PC-9 (cell line): ENCODE measurements at regions of chr10 and their contacts with region 1.

Region 1: GRCh38 chr10:119028900-119029612 is 458 bp upstream of the NANOS1 start:
- DNase-seq: peak; percentile 58 to 79
- H3K4me3 ChIP-seq: peak overlapping the region; percentile 26; the same call in 1 of the 2 replicates
- H3K27ac ChIP-seq: no peak overlapping the region
- H3K4me1 ChIP-seq: peaks cover 46% of the 10 kb centered on the region
- H3K27me3 ChIP-seq: no peaks in the 10 kb centered on the region
- CTCF ChIP-seq: no peak; the same call in 1 of the 2 replicates

Region 2: GRCh38 chr10:118754720-118755480 is 274.2 kb before region 1 on chr10 and contains the start of gene CACUL1:
- CTCF ChIA-PET with region 1: no interaction called
- POLR2A ChIA-PET with region 1: interaction called, 5 read pairs
- intact Hi-C with region 1: loop called (anchors 5 kb)
- DNase-seq: peak; percentile 91 to 98
- H3K4me3 ChIP-seq: peak within 1 kb of the TSS; percentile 96
- H3K27ac ChIP-seq: peak within 1 kb of the TSS; percentile 69
- H3K4me1 ChIP-seq: peaks cover 10% of the 10 kb centered on the region; the same call in 1 of the 2 replicates
- H3K27me3 ChIP-seq: no peaks in the 10 kb centered on the region
- CTCF ChIP-seq: no peak
- total RNA-seq, gene CACUL1: 49.4 and 62.5 TPM in 2 replicates

Region 3: GRCh38 chr10:118835682-118836326 is 193.3 kb before region 1 on chr10:
- CTCF ChIA-PET with region 1: no interaction called
- POLR2A ChIA-PET with region 1: no interaction called
- intact Hi-C with region 1: loop called (anchors 5 kb)
- DNase-seq: peak; percentile 89 to 90
- H3K4me3 ChIP-seq: no peak overlapping the region
- H3K27ac ChIP-seq: peak overlapping the region; percentile 41
- H3K4me1 ChIP-seq: peaks cover 38% of the 10 kb centered on the region
- H3K27me3 ChIP-seq: no peaks in the 10 kb centered on the region
- CTCF ChIP-seq: no peak

Region 4: DNA sequence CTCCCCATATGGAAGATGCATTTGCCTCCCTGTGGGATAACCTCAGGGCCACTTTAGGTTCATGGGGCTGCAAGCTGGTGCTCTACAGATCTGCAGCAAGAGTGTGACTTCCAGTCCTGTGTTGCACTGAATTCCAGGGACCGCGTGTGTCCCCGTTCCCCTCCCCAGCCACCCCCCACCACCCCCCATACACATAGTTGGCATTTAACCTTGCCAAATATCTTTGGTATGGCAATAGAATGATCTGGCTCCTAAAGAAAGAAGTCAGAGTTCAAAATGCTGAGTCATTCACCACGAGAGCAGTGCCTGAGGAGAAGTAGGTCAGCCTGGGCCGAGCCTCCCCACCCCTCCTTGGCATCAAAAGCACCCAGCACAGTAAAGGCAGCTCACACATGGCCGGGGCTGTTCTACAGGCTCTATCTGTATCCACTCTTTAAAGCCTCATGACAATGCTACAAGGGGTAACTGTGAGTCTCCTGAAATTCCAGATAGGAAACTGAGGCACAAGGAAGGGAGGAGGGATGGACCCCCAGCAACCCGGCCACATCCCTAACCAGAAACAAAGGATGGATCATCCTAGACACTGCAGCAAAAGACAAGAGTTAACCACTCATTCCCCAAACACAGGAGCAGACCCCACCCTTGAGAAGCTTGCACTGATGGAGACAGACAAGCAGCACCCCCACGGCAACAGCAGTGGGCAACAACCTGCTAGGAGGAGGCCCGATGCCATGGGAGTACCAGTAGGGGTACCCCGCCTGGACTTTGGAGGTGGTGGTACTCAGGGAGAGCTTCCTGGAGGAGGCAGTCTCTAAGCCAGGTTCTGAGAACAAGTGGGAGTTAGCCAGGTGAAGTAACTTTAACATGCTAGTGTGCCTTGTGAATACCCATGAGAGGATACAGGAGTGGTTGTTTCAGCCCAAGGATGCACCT is 69.8 kb before region 1 on chr10:
- CTCF ChIA-PET with region 1: no interaction called
- POLR2A ChIA-PET with region 1: interaction called, 3 read pairs
- intact Hi-C with region 1: loop called (anchors 5 kb)
- DNase-seq: peak; percentile 65 to 87
- H3K4me3 ChIP-seq: peak overlapping the region; percentile 24; the same call in 1 of the 2 replicates
- H3K27ac ChIP-seq: peak overlapping the region; percentile 92
- H3K4me1 ChIP-seq: peaks cover 49% of the 10 kb centered on the region
- H3K27me3 ChIP-seq: no peaks in the 10 kb centered on the region
- CTCF ChIP-seq: no peak